GM12878 (cell line): ENCODE measurements at regions of chr2 and their contacts with region 1.

Region 1: GRCh38 chr2:204691911-204692510 is 146.7 kb downstream of the PARD3B start:
- DNase-seq: no peak
- ATAC-seq: peak; percentile 72
- H3K4me3 ChIP-seq: no peak overlapping the region
- H3K27ac ChIP-seq: no peak overlapping the region
- H3K4me1 ChIP-seq: no peaks in the 10 kb centered on the region
- H3K27me3 ChIP-seq: no peaks in the 10 kb centered on the region
- CTCF ChIP-seq: peak; percentile 60 to 62 (median 62)
- EP300 ChIP-seq: no peak
- POLR2A ChIP-seq: no peak
- RAD21 ChIP-seq: peak; percentile 69

Region 2: GRCh38 chr2:204108330-204108751 is 583.7 kb before region 1 on chr2:
- CTCF ChIA-PET with region 1: no interaction called
- POLR2A ChIA-PET with region 1: no interaction called
- RAD21 ChIA-PET with region 1: no interaction called
- SMC1A ChIA-PET with region 1: no interaction called
- in situ Hi-C with region 1: no loop called
- intact Hi-C with region 1: loop called (anchors 2 kb)
- DNase-seq: no peak
- ATAC-seq: peak; percentile 72
- H3K4me3 ChIP-seq: no peak overlapping the region
- H3K27ac ChIP-seq: no peak overlapping the region
- H3K4me1 ChIP-seq: peaks cover 19% of the 10 kb centered on the region
- H3K27me3 ChIP-seq: peaks cover 1 to 12% of the 10 kb centered on the region in 2 experiments; a peak in 2 of 4 replicates
- CTCF ChIP-seq: peak; percentile 29 to 46 (median 45); a peak in 5 of 6 replicates
- EP300 ChIP-seq: no peak
- POLR2A ChIP-seq: no peak
- RAD21 ChIP-seq: peak; percentile 56

Region 3: GRCh38 chr2:204145263-204145751 is 546.7 kb before region 1 on chr2:
- CTCF ChIA-PET with region 1: no interaction called
- POLR2A ChIA-PET with region 1: no interaction called
- RAD21 ChIA-PET with region 1: no interaction called
- SMC1A ChIA-PET with region 1: no interaction called
- in situ Hi-C with region 1: no loop called
- intact Hi-C with region 1: loop called (anchors 5 kb)
- DNase-seq: no peak
- ATAC-seq: peak; percentile 100
- H3K4me3 ChIP-seq: no peak overlapping the region
- H3K27ac ChIP-seq: no peak overlapping the region
- H3K4me1 ChIP-seq: no peaks in the 10 kb centered on the region
- H3K27me3 ChIP-seq: peaks cover 0 to 4% of the 10 kb centered on the region in 2 experiments; a peak in 3 of 4 replicates
- CTCF ChIP-seq: peak; percentile 83 to 95 (median 90)
- EP300 ChIP-seq: no peak
- POLR2A ChIP-seq: no peak
- RAD21 ChIP-seq: peak; percentile 83

Region 4: DNA sequence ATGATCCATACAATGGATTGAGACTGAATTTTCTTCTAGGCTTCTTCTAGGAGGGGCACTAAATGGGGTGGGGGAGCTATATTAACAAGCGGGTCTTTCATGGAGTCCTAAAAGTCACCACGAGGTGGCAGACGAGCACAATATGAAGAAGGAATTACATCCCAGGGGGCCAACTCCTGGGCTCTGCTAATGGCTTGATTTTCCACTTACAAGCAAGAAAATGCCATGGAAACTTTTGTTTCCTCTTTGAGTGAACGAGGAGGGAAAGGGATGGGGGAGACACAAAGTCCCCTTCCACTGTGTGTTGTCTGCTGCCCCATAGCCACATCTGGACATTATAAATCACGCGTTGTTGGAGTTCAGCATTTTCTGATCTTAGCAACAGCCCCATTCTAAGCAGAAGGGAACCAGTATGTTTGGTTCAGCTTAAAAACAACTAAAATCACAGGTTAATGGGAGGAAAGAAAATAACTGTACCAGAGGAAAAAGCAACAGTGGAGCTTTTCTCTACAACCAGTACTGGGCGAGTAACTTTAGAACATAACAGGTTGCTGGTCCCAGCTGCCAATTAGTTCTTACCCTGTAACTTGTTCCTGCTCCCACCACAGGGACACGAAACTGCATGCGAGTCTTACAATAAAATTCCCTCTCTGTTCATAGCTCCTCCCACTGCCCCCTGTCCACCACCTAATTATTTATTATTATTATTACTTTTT is 431.7 kb before region 1 on chr2:
- CTCF ChIA-PET with region 1: interaction called, 8 read pairs
- POLR2A ChIA-PET with region 1: no interaction called
- RAD21 ChIA-PET with region 1: interaction called, 10 read pairs
- SMC1A ChIA-PET with region 1: interaction called, 4 read pairs
- in situ Hi-C with region 1: no loop called
- intact Hi-C with region 1: loop called (anchors 5 kb)
- DNase-seq: no peak
- ATAC-seq: peak; percentile 76
- H3K4me3 ChIP-seq: no peak overlapping the region
- H3K27ac ChIP-seq: no peak overlapping the region
- H3K4me1 ChIP-seq: no peaks in the 10 kb centered on the region
- H3K27me3 ChIP-seq: no peaks in the 10 kb centered on the region
- CTCF ChIP-seq: peak; percentile 51 to 55 (median 54); a peak in 5 of 6 replicates
- EP300 ChIP-seq: no peak
- POLR2A ChIP-seq: no peak
- RAD21 ChIP-seq: 0 out of 2 replicates have a peak, but pooled peaks have one; percentile 30

Region 5: GRCh38 chr2:204315236-204315662 is 376.8 kb before region 1 on chr2:
- CTCF ChIA-PET with region 1: no interaction called
- POLR2A ChIA-PET with region 1: no interaction called
- RAD21 ChIA-PET with region 1: no interaction called
- SMC1A ChIA-PET with region 1: no interaction called
- in situ Hi-C with region 1: loop called (anchors 5 kb)
- intact Hi-C with region 1: no loop called
- DNase-seq: no peak
- ATAC-seq: no peak
- H3K4me3 ChIP-seq: no peak overlapping the region
- H3K27ac ChIP-seq: no peak overlapping the region
- H3K4me1 ChIP-seq: no peaks in the 10 kb centered on the region
- H3K27me3 ChIP-seq: no peaks in the 10 kb centered on the region; a peak in 2 of 4 replicates
- CTCF ChIP-seq: no peak
- EP300 ChIP-seq: no peak
- POLR2A ChIP-seq: no peak
- RAD21 ChIP-seq: no peak

Region 6: DNA sequence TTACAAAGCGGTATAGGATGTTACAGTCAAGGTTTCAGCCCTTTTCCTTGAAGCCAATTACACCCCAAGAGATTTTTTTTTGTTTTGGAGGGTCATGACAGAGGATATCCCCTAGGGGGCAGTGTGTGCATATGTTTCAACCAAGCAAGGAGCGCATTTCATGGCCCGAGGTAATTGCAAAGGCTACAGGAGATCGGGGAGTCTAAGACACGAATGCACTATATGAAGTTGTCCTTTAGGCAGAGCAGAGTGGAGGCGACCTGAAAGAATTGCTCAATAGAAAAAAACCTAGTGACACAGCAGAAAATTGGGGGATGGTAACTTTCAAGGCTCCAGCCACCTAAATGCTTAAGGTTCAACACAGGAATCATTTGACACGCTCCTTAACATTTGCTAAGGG is 366.5 kb before region 1 on chr2:
- CTCF ChIA-PET with region 1: interaction called, 9 read pairs
- POLR2A ChIA-PET with region 1: no interaction called
- RAD21 ChIA-PET with region 1: interaction called, 11 read pairs
- SMC1A ChIA-PET with region 1: interaction called, 5 read pairs
- in situ Hi-C with region 1: no loop called
- intact Hi-C with region 1: loop called (anchors 1 kb)
- DNase-seq: no peak
- ATAC-seq: peak; percentile 87
- H3K4me3 ChIP-seq: no peak overlapping the region
- H3K27ac ChIP-seq: no peak overlapping the region
- H3K4me1 ChIP-seq: no peaks in the 10 kb centered on the region
- H3K27me3 ChIP-seq: no peaks in the 10 kb centered on the region
- CTCF ChIP-seq: peak; percentile 72 to 83 (median 72)
- EP300 ChIP-seq: no peak
- POLR2A ChIP-seq: no peak
- RAD21 ChIP-seq: peak; percentile 90